ENCODE measurements at regions of chr3 and their contacts with region 1.

Region 1: GRCh38 chr3:98817547-98818041 is 54.5 kb downstream of the ST3GAL6 start:
- DNase-seq: no peak
- H3K4me3 ChIP-seq: no peak overlapping the region
- H3K27ac ChIP-seq: no peak overlapping the region
- H3K4me1 ChIP-seq: no peaks in the 10 kb centered on the region
- H3K27me3 ChIP-seq: no peaks in the 10 kb centered on the region
- CTCF ChIP-seq: peak; percentile 70 to 73 (median 71)
- POLR2A ChIP-seq: no peak

Region 2: GRCh38 chr3:98602078-98602678 is 215.4 kb before region 1 on chr3:
- intact Hi-C with region 1: loop called (anchors 10 kb)
- DNase-seq: no peak
- H3K4me3 ChIP-seq: no peak overlapping the region
- H3K27ac ChIP-seq: no peak overlapping the region
- H3K4me1 ChIP-seq: no peaks in the 10 kb centered on the region
- H3K27me3 ChIP-seq: no peaks in the 10 kb centered on the region
- CTCF ChIP-seq: peak; percentile 38 to 55 (median 52)
- POLR2A ChIP-seq: no peak

Region 3: DNA sequence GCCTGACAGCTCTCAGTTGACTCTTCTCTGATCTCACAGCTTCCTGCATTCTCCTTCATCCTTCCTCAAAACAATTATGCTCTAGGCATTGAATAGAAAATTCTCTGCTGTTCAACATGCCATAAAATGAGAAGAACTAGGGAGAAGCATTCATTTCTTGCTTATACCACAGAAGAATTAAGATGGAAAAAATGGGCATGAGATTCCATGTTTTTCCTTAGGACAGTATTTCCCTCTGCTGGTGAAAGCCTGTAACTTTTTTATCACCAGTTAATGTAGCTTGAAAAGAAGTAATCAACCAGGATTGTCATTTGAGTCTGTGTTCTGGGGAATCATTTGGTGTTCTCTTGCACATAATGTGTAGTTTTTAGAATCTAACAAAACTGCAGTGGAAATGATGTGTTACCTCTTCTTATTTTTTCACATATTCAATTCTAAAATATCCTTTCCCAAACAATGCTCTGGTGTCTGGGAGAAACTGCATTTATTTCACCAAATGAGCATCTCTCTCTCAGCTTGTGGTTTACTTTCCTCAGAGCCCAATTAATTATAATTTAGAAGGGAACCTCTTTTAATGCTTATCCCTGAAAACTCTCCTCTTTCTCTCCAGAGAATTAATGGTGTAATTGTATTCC is 176.7 kb after region 1 on chr3:
- intact Hi-C with region 1: loop called (anchors 10 kb)
- DNase-seq: no peak
- H3K4me3 ChIP-seq: no peak overlapping the region
- H3K27ac ChIP-seq: no peak overlapping the region
- H3K4me1 ChIP-seq: no peaks in the 10 kb centered on the region
- H3K27me3 ChIP-seq: no peaks in the 10 kb centered on the region
- CTCF ChIP-seq: peak; percentile 48 to 67 (median 64)
- POLR2A ChIP-seq: no peak

Region 4: DNA sequence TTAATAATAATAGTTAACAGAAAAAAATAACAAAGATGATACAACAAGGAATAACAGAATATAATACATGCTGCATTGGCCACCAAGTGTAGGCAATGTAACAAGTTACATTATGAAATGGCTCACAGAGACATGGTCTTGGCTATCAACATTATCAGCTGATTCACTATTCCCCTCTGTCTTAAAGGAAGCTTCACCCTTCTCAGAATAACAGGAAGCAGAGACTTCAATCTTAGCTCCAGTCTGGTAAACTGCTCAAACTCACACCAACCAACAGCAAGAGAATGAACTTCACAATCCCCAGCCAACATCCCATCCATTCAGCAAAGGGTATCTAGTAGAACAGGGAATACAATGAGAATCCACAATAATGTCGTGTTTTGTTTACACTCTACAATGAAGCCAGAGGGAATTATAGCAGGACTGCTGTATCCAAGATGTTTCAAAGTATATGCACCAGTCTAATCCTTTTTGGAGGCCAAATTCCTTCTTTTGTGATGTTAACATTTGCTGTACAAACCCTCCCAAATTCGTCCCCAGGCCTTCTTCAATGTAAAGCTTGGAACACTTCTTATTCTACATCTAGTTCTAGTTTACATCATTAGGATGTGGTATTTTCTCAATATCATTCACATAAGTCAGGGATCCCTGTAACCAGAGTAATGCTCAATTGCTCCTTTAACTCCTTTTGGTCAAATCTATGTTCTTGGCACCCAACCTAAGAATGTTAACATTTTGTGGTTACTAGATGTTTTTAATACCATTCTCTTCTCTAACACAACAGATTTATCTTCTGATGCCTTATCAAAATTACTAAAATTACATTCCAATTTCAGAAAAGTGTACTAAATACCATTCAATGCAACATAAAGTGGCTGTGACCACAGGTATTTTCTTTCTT is 947.7 kb after region 1 on chr3:
- intact Hi-C with region 1: no loop called
- DNase-seq: no peak
- H3K4me3 ChIP-seq: no peak overlapping the region
- H3K27ac ChIP-seq: no peak overlapping the region
- H3K4me1 ChIP-seq: no peaks in the 10 kb centered on the region
- H3K27me3 ChIP-seq: no peaks in the 10 kb centered on the region
- CTCF ChIP-seq: no peak
- POLR2A ChIP-seq: no peak